ENCODE measurements at regions of chr14 and their contacts with region 1.

Region 1: DNA sequence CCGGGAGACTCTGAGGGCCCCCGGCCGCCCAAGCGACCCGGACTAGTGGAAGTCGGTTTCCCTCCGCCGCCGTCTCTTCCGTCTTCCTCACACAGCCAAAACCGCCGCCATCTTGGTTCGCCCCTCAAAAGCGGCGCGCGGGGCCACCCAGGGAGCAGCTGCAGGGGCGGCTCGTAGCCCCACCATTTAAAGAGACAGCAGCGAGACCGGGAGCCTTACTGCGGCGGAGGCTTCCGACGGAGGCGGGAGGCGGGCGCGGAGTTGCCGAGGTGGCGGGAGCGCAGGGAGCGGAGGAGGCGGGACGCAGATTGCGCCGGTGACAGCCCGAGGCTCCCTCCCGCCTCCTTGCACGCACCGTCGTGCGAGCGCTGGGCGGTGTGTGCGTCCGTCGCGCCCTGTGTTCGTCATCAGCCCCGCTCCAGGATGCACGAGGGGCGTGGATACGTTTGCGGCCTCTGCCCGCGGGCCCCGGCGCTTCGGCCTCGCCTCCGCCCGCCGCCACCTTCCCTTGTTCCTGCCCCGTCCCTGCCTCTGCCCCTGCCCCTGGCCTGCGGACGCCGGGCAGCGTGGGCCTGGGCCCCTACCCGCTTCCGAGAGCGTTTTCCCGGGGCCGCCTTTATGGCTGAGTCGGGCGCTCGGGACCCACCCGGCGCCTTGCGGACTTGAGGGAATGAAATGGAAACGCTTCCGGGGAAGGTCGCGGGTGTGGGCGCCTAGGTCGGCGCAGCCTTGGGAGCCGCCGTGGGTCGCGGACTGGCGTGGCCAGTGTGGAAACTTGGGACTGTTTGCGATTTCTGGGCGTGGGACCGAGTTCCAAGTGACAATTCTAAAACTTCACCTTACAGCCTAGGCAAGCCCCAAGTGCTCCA is at the start of gene PPP4R3A:
- DNase-seq: peak; percentile 97
- ATAC-seq: peak; percentile 88
- H3K4me3 Mint-ChIP-seq: peak within 1 kb of the TSS; percentile 96
- H3K27ac Mint-ChIP-seq: peak within 1 kb of the TSS; percentile 100
- H3K4me1 Mint-ChIP-seq: peaks cover 20% of the 10 kb centered on the region
- H3K27me3 Mint-ChIP-seq: no peaks in the 10 kb centered on the region
- total RNA-seq, gene PPP4R3A: 105 to 122 TPM

Region 2: GRCh38 chr14:91317381-91318308 is 192.8 kb before region 1 on chr14:
- CTCF ChIA-PET with region 1: no interaction called
- POLR2A ChIA-PET with region 1: no interaction called
- intact Hi-C with region 1: loop called (anchors 1 to 5 kb)
- DNase-seq: peak; percentile 93
- ATAC-seq: peak; percentile 60
- H3K4me3 Mint-ChIP-seq: peak overlapping the region; percentile 56
- H3K27ac Mint-ChIP-seq: peak overlapping the region; percentile 96
- H3K4me1 Mint-ChIP-seq: peaks cover 83% of the 10 kb centered on the region
- H3K27me3 Mint-ChIP-seq: no peaks in the 10 kb centered on the region

Region 3: GRCh38 chr14:91350813-91351511 is 159.4 kb before region 1 on chr14:
- CTCF ChIA-PET with region 1: interaction called, 3 read pairs
- POLR2A ChIA-PET with region 1: no interaction called
- intact Hi-C with region 1: loop called in 1 of 2 experiments (anchors 1 kb)
- DNase-seq: peak; percentile 81
- ATAC-seq: peak; percentile 59
- H3K4me3 Mint-ChIP-seq: peak overlapping the region; percentile 65
- H3K27ac Mint-ChIP-seq: peak overlapping the region; percentile 92
- H3K4me1 Mint-ChIP-seq: peaks cover 95% of the 10 kb centered on the region
- H3K27me3 Mint-ChIP-seq: no peaks in the 10 kb centered on the region

Region 4: GRCh38 chr14:91388551-91388975 is 121.8 kb before region 1 on chr14:
- CTCF ChIA-PET with region 1: no interaction called
- POLR2A ChIA-PET with region 1: no interaction called
- intact Hi-C with region 1: no loop called
- DNase-seq: peak; percentile 73
- ATAC-seq: peak; percentile 88
- H3K4me3 Mint-ChIP-seq: peak overlapping the region; percentile 26
- H3K27ac Mint-ChIP-seq: peak overlapping the region; percentile 85
- H3K4me1 Mint-ChIP-seq: peaks cover 89% of the 10 kb centered on the region
- H3K27me3 Mint-ChIP-seq: no peaks in the 10 kb centered on the region

Region 5: DNA sequence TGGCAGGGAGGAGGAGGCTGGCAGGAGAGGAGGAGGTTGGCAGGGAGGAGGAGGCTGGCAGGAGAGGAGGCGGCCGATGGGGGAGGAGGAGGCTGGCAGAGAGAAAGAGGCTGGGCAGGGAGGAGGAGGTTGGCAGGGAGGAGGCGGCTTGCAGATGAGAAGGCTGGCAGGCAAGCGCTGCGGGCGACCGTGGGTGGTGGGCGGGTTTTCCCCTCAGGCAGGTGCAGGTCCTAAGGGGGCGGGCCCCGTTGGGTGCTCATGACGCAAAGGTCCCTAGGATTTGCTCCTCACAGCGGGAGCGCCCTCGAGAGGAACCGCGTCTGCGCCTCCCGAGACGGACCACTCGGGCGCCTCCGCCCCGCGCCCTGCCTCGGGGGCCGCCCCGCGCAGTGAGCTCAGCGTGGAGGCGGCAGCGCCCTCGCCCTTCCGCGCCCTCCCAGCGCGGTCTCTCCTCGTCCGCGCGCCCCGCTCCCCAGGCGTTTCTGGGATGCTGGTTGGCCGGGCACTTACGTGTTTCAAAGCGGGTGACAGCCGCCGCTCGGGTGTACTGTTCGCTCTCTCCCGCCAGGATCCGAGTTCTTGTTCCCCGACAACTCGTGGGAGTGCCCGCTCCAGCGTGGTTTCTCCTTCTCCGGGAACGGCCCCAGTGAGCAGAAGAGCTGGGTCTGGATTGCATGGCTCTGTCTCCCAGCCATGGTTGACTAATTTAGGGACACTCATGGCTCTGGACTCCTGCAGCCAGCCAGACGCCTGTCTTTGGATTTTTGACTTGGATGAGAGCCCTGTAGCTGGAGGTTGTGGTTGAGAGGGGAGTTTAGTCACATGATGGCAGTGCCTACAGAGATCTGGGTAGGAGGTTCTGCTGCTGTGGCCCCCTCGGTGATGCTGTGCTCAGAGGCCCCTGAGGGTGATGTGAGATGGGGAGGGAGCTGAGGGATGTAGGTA is 63.8 kb after region 1 on chr14:
- CTCF ChIA-PET with region 1: no interaction called
- POLR2A ChIA-PET with region 1: no interaction called
- intact Hi-C with region 1: loop called in 1 of 2 experiments (anchors 1 kb)
- DNase-seq: peak; percentile 96
- ATAC-seq: peak; percentile 91
- H3K4me3 Mint-ChIP-seq: peak overlapping the region; percentile 76
- H3K27ac Mint-ChIP-seq: peak overlapping the region; percentile 56
- H3K4me1 Mint-ChIP-seq: peaks cover 18% of the 10 kb centered on the region
- H3K27me3 Mint-ChIP-seq: peaks cover 10% of the 10 kb centered on the region

Region 6: GRCh38 chr14:91872517-91873470 is 362.4 kb after region 1 on chr14:
- CTCF ChIA-PET with region 1: no interaction called
- POLR2A ChIA-PET with region 1: no interaction called
- intact Hi-C with region 1: loop called in 1 of 2 experiments (anchors 2 kb)
- DNase-seq: peak; percentile 51
- ATAC-seq: no peak
- H3K4me3 Mint-ChIP-seq: peak overlapping the region; percentile 67
- H3K27ac Mint-ChIP-seq: peak overlapping the region; percentile 94
- H3K4me1 Mint-ChIP-seq: peaks cover 93% of the 10 kb centered on the region
- H3K27me3 Mint-ChIP-seq: no peaks in the 10 kb centered on the region

Region 7: GRCh38 chr14:92039719-92040430 is 529.5 kb after region 1 on chr14 and contains the start of gene TRIP11:
- CTCF ChIA-PET with region 1: no interaction called
- POLR2A ChIA-PET with region 1: no interaction called
- intact Hi-C with region 1: loop called (anchors 1 to 2 kb)
- DNase-seq: peak; percentile 98
- ATAC-seq: peak; percentile 95
- H3K4me3 Mint-ChIP-seq: peak within 1 kb of the TSS; percentile 92
- H3K27ac Mint-ChIP-seq: peak within 1 kb of the TSS; percentile 98
- H3K4me1 Mint-ChIP-seq: peaks cover 42% of the 10 kb centered on the region
- H3K27me3 Mint-ChIP-seq: no peaks in the 10 kb centered on the region
- total RNA-seq, gene TRIP11: 35.7 to 41.0 TPM

Region 8: DNA sequence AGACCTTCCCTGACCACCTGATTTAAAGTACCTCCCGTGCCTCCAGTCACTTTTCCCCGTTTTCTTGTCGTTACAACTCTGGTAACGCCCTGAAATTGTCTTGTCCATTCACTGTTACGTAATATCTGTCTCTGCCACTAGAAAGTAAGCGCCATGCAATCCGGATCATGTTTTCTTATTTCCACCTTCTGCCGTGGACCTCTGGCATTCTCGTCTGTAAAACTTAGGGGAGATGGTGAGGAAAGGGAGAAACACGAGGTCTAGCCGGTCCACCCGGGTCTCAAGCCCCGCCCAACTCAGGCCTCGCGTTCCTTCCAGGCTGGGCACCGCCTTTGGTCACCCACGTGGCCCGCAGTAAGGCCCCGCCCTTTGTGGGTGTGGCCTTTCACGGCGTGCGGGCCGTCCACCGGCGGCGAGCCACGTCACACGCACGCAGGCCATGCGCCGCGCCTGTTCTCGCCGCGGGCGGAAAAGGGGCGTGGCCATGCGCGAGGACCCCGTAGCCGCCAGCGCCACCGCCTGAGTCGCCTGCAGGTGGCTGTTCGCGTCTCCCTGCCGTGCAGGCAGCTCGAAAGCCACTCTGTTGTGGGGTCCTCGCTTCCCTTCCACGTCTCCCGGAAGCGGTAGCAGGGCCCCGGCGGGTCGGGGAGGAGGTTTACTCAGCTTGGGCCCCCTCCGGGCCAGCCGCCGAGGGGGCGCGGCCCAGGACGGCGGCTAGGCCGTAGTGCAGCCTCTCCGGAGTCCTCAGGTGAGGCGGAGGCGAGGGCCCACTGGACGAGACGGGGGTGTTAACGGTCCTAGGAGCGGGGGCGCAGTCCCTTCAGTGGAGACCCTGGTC is 1283.5 kb after region 1 on chr14 and contains the start of gene GOLGA5:
- CTCF ChIA-PET with region 1: no interaction called
- POLR2A ChIA-PET with region 1: no interaction called
- intact Hi-C with region 1: loop called in 1 of 2 experiments (anchors 5 kb)
- DNase-seq: peak; percentile 98
- ATAC-seq: peak; percentile 98
- H3K4me3 Mint-ChIP-seq: peak within 1 kb of the TSS; percentile 99
- H3K27ac Mint-ChIP-seq: peak within 1 kb of the TSS; percentile 96
- H3K4me1 Mint-ChIP-seq: peaks cover 40% of the 10 kb centered on the region
- H3K27me3 Mint-ChIP-seq: no peaks in the 10 kb centered on the region
- total RNA-seq, gene GOLGA5: 20.3 to 23.5 TPM